ENCODE measurements at regions of chr15 and their contacts with region 1.

Region 1: GRCh38 chr15:51776952-51777574 is 25.7 kb downstream of the TMOD2 start:
- DNase-seq: peak; percentile 21
- H3K4me3 ChIP-seq: no peak overlapping the region
- CTCF ChIP-seq: peak; percentile 82

Region 2: DNA sequence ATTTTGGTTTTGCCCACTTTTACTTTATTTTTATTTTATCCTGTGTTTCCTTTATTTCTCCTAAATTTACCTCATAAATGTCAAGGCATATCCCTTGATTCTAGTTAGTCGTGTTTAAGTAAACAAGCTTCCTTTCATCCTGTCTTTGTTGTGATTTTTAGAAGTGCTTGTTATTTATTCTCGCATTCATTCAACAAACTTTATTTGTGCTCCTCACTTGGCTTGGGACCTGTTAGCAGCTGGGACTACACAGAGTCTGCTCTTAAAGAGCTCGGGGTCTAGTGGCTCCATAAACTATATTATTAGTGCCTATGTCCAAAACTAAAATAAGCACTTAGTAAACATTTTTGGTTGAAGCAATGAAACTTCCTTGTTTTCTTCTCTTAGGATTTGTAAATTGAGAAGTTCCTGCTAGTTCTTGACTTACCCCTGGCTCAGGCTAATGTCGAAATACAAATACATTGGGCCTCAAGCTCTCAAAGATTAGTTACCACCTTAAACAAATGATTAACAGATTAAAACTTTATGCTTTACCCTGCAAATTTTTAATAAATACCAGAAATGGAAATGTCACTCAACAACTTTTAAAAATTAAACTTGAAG is 135.4 kb before region 1 on chr15:
- CTCF ChIA-PET with region 1: interaction called, 511 read pairs
- POLR2A ChIA-PET with region 1: no interaction called
- DNase-seq: no peak
- H3K4me3 ChIP-seq: no peak overlapping the region
- CTCF ChIP-seq: no peak

Region 3: GRCh38 chr15:51667478-51667877 is 109.6 kb before region 1 on chr15:
- CTCF ChIA-PET with region 1: interaction called, 20 read pairs
- POLR2A ChIA-PET with region 1: no interaction called
- DNase-seq: no peak
- H3K4me3 ChIP-seq: no peak overlapping the region
- CTCF ChIP-seq: no peak

Region 4: GRCh38 chr15:51697163-51697562 is 79.9 kb before region 1 on chr15:
- CTCF ChIA-PET with region 1: interaction called, 14 read pairs
- POLR2A ChIA-PET with region 1: no interaction called
- DNase-seq: no peak
- H3K4me3 ChIP-seq: no peak overlapping the region
- CTCF ChIP-seq: no peak

Region 5: GRCh38 chr15:51726351-51727073 is 50.6 kb before region 1 on chr15:
- CTCF ChIA-PET with region 1: interaction called, 14 read pairs
- POLR2A ChIA-PET with region 1: no interaction called
- DNase-seq: peak; percentile 56
- H3K4me3 ChIP-seq: no peak overlapping the region
- CTCF ChIP-seq: no peak

Region 6: GRCh38 chr15:51751686-51752683 is 25.1 kb before region 1 on chr15:
- CTCF ChIA-PET with region 1: interaction called, 150 read pairs
- POLR2A ChIA-PET with region 1: no interaction called
- DNase-seq: no peak
- H3K4me3 ChIP-seq: peak overlapping the region; percentile 66
- CTCF ChIP-seq: no peak

Region 7: GRCh38 chr15:51799282-51800252 is 22.5 kb after region 1 on chr15:
- CTCF ChIA-PET with region 1: interaction called, 13 read pairs
- POLR2A ChIA-PET with region 1: no interaction called
- DNase-seq: no peak
- H3K4me3 ChIP-seq: no peak overlapping the region
- CTCF ChIP-seq: no peak

Region 8: GRCh38 chr15:51849860-51850259 is 72.8 kb after region 1 on chr15:
- CTCF ChIA-PET with region 1: no interaction called
- POLR2A ChIA-PET with region 1: no interaction called
- DNase-seq: no peak
- H3K4me3 ChIP-seq: no peak overlapping the region
- CTCF ChIP-seq: no peak

Region 9: GRCh38 chr15:51909584-51909983 is 132.5 kb after region 1 on chr15:
- CTCF ChIA-PET with region 1: no interaction called
- POLR2A ChIA-PET with region 1: no interaction called
- DNase-seq: no peak
- H3K4me3 ChIP-seq: no peak overlapping the region
- CTCF ChIP-seq: no peak

Region 10: DNA sequence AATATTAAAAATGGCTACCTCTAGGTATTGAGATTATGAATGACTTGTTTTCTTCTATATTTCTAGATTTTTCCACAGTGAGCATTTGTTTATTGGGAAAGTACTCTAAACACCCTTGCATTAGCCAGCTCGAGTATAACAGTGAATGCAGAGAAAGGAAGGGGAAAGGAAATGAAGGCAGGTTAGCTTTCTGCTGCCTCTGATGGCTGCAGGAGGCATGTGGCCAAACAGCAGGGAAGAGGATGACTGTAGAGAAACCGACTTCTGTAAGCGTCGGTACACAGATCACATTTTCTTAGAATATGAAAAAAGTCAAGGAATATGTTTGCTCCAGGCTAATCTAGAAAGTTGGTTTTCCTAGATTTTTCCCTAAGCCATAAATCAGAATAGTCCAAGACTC is 394.3 kb after region 1 on chr15:
- CTCF ChIA-PET with region 1: no interaction called
- POLR2A ChIA-PET with region 1: no interaction called
- DNase-seq: no peak
- H3K4me3 ChIP-seq: no peak overlapping the region
- CTCF ChIP-seq: no peak

Region 11: GRCh38 chr15:52462806-52463360 is 685.8 kb after region 1 on chr15:
- CTCF ChIA-PET with region 1: no interaction called
- POLR2A ChIA-PET with region 1: no interaction called
- DNase-seq: no peak
- H3K4me3 ChIP-seq: no peak overlapping the region
- CTCF ChIP-seq: no peak